ENCODE measurements at regions of chr3 and their contacts with region 1.

Region 1: DNA sequence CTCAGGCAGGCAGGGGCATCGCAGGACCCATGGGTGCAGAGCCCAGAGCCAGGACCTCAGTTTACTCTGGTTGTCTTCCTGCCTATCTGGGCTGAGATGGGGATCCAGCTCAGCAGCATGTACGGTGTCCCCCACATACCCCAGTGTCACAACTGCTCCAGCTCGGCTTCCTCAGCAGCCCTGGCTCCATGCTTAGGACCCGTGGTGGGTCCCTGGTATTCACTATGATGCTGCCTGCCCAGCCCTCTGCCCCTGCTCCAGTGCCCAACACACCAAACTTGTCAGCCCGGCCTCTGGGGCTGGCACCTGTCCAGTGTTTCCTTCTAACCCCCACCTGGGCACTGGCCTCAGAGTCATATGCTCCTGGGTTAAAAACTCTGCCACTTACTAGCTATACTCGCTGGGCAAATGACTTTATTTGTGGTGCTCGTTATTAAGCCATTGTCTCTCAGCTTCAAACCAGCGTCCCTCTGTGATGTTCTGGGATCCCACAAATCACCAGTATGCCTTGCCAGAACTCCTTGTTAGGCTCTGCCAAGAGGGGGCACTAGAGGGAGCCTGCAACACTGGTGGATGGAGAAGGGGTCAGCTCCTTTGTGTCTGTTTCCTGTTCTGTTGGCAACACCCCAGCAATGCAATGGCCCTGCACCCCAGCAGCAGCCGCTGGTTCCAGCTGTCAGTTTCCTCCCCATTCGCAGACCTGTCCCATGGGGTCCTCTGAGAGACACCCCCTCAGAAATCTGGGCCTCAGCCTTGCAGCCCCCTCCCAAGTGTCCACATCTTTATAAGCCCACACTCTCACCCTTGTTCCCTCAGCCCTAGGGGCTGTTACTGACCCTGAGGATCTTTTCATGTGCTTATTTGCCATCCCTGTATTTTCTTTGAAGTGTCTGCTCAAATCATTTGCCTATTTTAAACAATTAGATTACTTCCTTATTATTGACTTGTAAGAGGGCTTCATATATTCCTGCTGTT is 24.1 kb upstream of the MRPS22 start:
- DNase-seq: no peak
- ATAC-seq: no peak
- H3K4me3 ChIP-seq: no peak overlapping the region
- H3K27ac ChIP-seq: no peak overlapping the region
- H3K4me1 ChIP-seq: no peaks in the 10 kb centered on the region
- H3K27me3 ChIP-seq: peaks cover 3% of the 10 kb centered on the region
- CTCF ChIP-seq: peak; percentile 25; the same call in 1 of the 2 replicates
- POLR2A ChIP-seq: no peak
- RAD21 ChIP-seq: no peak

Region 2: GRCh38 chr3:139120086-139121056 is 199.3 kb before region 1 on chr3:
- CTCF ChIA-PET with region 1: no interaction called
- POLR2A ChIA-PET with region 1: no interaction called
- dilution Hi-C with region 1: no loop called
- in situ Hi-C with region 1: loop called (anchors 10 kb)
- intact Hi-C with region 1: no loop called
- DNase-seq: peak; percentile 87
- ATAC-seq: peak; percentile 58
- H3K4me3 ChIP-seq: no peak overlapping the region
- H3K27ac ChIP-seq: no peak overlapping the region
- H3K4me1 ChIP-seq: peaks cover 31% of the 10 kb centered on the region
- H3K27me3 ChIP-seq: no peaks in the 10 kb centered on the region; the same call in 1 of the 2 replicates
- CTCF ChIP-seq: no peak
- POLR2A ChIP-seq: no peak
- RAD21 ChIP-seq: no peak